ENCODE measurements at regions of chr6 and their contacts with region 1.

Region 1: DNA sequence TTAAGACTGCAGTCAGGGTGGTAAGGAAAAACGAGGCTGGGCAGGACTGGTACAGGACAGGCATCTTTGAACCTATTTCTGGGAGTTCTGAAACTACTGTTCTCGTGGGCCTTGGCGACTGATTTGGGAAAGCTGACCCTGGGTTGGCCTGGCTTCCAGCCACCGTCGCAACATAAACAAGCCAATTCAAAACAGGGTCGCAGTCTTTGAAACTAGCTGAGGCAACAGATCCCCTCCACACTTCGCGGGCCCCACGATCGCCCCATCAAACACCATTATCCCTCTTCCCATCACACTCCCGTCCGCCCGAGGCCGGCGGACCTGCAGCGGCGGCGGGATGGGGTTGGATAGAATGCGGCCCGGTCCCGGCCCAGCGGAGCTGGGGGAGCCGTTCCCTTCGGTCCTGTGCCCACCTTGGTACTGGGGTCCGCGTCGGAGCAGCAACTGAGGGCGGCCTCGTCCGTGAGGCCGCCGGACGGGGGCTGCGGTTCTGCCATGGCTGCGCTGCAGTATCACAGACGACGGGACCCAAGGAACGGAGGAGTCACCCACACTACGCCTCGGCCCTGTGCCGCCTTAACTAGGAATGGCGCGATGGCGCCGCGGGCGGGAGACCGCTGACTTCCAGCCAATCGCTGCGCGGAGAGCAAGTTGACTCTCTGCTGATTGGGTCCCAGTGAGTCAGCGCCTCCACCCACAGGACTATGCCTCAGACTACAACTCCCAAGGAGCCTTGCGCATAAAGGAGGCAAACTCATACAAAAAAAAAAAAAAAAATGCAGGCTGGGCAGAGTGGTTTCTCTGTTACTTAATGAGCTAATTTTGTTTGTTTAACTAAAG is at the start of gene GLO1:
- DNase-seq: peak; percentile 98
- ATAC-seq: peak; percentile 100
- H3K4me3 Mint-ChIP-seq: peak within 1 kb of the TSS; percentile 96
- H3K27ac Mint-ChIP-seq: peak within 1 kb of the TSS; percentile 98
- H3K4me1 Mint-ChIP-seq: peaks cover 38% of the 10 kb centered on the region
- H3K27me3 Mint-ChIP-seq: peaks cover 3% of the 10 kb centered on the region
- total RNA-seq, gene GLO1: 150 to 152 TPM

Region 2: DNA sequence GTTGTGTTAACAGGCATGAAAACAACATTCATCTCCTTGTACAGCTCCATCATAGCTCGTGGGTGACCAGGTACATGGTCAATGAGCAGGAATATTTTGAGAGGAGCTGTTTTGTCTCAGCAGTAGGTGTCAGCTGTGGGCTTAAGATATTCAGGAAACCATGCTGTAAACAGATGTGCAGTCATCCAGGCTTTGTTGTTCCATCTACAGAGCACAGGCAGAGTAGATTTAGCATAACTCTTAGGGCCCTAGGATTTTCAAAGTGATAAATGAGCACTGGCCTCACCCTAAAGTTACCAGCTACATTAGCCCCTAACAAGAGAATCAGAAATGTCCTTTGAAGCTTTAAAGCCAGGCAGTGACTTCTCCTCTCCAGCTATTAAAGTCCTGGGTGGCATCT is 217.3 kb before region 1 on chr6:
- CTCF ChIA-PET with region 1: no interaction called
- POLR2A ChIA-PET with region 1: no interaction called
- intact Hi-C with region 1: no loop called
- DNase-seq: no peak
- ATAC-seq: no peak
- H3K4me3 Mint-ChIP-seq: no peak overlapping the region
- H3K27ac Mint-ChIP-seq: no peak overlapping the region
- H3K4me1 Mint-ChIP-seq: no peaks in the 10 kb centered on the region
- H3K27me3 Mint-ChIP-seq: no peaks in the 10 kb centered on the region

Region 3: DNA sequence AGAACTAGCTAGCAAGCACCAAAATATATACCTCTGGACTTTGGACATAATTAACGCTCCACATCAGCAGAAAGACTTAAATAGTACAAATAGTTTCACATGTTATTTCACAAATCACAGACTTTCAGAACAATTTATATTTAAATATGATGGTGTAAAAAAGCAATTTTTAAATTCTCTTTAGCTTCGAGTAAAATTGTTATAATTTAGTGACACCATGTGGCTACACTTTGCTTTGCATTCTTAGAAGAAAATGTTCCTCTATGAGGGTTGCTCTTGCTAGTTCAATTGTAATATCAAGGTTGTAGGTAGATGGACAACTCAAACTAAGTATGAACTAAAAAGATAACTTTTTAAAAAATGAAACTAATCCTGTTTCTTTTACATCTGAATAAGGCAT is 132.0 kb before region 1 on chr6:
- CTCF ChIA-PET with region 1: no interaction called
- POLR2A ChIA-PET with region 1: no interaction called
- intact Hi-C with region 1: loop called in 1 of 2 experiments (anchors 5 kb)
- DNase-seq: no peak
- ATAC-seq: no peak
- H3K4me3 Mint-ChIP-seq: no peak overlapping the region
- H3K27ac Mint-ChIP-seq: no peak overlapping the region
- H3K4me1 Mint-ChIP-seq: peaks cover 23% of the 10 kb centered on the region
- H3K27me3 Mint-ChIP-seq: no peaks in the 10 kb centered on the region

Region 4: DNA sequence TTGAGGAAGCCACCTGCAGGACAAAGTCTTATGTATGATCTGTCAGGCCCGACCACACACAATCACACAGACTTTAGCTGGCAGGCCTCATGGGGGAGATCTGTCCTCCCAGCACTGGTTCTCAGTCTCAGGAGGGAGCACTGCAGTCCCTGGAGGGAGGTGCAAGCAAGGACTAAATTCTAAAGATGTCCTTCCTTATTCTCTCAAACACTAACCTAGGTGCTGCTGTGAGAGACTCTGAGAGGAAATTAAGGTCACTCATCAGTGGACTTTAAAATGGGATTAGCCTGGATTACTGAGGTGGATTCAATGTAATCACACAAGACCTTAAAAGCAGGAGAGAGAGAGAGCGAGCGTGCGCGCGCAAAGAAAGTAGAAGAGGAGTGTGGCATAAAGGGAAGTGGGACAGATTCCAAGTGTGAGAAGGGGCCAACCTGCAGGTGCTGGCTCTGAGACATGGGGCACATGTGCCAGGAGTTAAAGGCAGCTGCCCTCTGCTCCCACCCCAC is 14.1 kb before region 1 on chr6:
- CTCF ChIA-PET with region 1: no interaction called
- POLR2A ChIA-PET with region 1: no interaction called
- intact Hi-C with region 1: loop called in 1 of 2 experiments (anchors 1 kb)
- DNase-seq: no peak
- ATAC-seq: no peak
- H3K4me3 Mint-ChIP-seq: no peak overlapping the region
- H3K27ac Mint-ChIP-seq: peak overlapping the region; percentile 27
- H3K4me1 Mint-ChIP-seq: peaks cover 10% of the 10 kb centered on the region
- H3K27me3 Mint-ChIP-seq: no peaks in the 10 kb centered on the region

Region 5: GRCh38 chr6:38720295-38720694 is 17.5 kb after region 1 on chr6:
- CTCF ChIA-PET with region 1: no interaction called
- POLR2A ChIA-PET with region 1: interaction called, 14 read pairs
- intact Hi-C with region 1: loop called in 1 of 2 experiments (anchors 2 kb)
- DNase-seq: no peak
- ATAC-seq: no peak
- H3K4me3 Mint-ChIP-seq: no peak overlapping the region
- H3K27ac Mint-ChIP-seq: no peak overlapping the region
- H3K4me1 Mint-ChIP-seq: peaks cover 5% of the 10 kb centered on the region
- H3K27me3 Mint-ChIP-seq: peaks cover 33% of the 10 kb centered on the region